ENCODE measurements at regions of chr10 and their contacts with region 1.

Region 1: GRCh38 chr10:3239066-3239919 is 66.7 kb upstream of the PITRM1 start:
- DNase-seq: peak; percentile 92
- H3K4me3 ChIP-seq: peak overlapping the region in 3 of 8 donors; percentile 12 to 46 (median 19)
- H3K27ac ChIP-seq: peak overlapping the region in 7 of 8 donors; percentile 66 to 78 (median 73)
- H3K4me1 ChIP-seq: peaks cover 0 to 16% (median 10%) of the 10 kb centered on the region in 6 donors
- H3K27me3 ChIP-seq: peaks cover 0 to 13% (median 0%) of the 10 kb centered on the region in 7 donors
- CTCF ChIP-seq: peak; percentile 82 to 95 (median 90)
- POLR2A ChIP-seq: no peak

Region 2: DNA sequence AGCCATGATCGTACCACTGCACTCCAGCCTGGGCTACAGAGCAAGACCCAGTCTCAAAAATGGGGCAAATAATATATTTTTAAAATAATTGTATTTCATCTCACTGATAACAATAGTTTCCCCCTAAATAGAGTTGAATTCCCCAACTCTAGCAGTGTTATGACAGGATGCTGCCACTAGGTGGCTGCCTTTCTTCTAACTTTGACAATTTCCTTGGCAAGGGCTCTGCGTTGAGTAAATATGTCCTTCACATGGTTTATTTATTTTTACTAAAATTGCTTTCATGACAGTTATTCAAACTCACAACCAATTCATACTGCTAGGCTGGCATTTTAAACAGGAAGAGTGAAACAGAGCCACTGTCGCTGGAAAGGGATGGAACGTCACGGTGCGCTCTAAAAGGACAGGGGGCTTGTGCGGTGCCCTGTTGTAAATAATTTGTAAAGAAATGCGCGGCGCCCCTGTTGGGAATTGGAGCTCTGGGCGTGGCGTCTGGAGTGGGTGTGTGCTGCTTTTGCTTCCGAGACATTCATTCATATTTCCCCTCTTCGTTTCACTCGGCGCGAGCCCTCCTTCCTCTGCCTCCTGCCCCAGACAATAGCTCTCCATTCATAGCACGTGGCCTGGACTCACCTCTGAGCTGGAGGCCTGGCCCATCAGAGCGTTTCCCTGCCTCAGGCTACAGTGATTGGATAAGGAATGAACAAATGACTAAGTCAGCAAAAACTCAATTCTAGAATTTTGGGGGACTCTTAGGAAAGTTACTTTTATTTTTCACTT is 46.2 kb before region 1 on chr10:
- intact Hi-C with region 1: no loop called
- DNase-seq: no peak
- H3K4me3 ChIP-seq: peak overlapping the region in 2 of 8 donors; percentile 16 to 36
- H3K27ac ChIP-seq: peak overlapping the region in 5 of 8 donors; percentile 35 to 65 (median 52)
- H3K4me1 ChIP-seq: peaks cover 7 to 29% (median 15%) of the 10 kb centered on the region in 6 donors
- H3K27me3 ChIP-seq: peaks cover 0 to 19% (median 3%) of the 10 kb centered on the region in 7 donors
- CTCF ChIP-seq: peak; percentile 41 to 90 (median 83)
- POLR2A ChIP-seq: no peak

Region 3: GRCh38 chr10:3419502-3420495 is 180.5 kb after region 1 on chr10:
- intact Hi-C with region 1: no loop called
- DNase-seq: no peak
- H3K4me3 ChIP-seq: no peak overlapping the region
- H3K27ac ChIP-seq: no peak overlapping the region
- H3K4me1 ChIP-seq: peaks cover 3 to 20% (median 5%) of the 10 kb centered on the region in 6 donors
- H3K27me3 ChIP-seq: peaks cover 0 to 10% (median 0%) of the 10 kb centered on the region in 7 donors
- CTCF ChIP-seq: no peak
- POLR2A ChIP-seq: no peak

Region 4: GRCh38 chr10:3538658-3539531 is 299.6 kb after region 1 on chr10:
- intact Hi-C with region 1: no loop called
- DNase-seq: no peak
- H3K4me3 ChIP-seq: no peak overlapping the region
- H3K27ac ChIP-seq: peak overlapping the region in 1 of 8 donors; percentile 56
- H3K4me1 ChIP-seq: no peaks in the 10 kb centered on the region
- H3K27me3 ChIP-seq: no peaks in the 10 kb centered on the region
- CTCF ChIP-seq: no peak
- POLR2A ChIP-seq: no peak

Region 5: GRCh38 chr10:3776796-3777571 is 537.7 kb after region 1 on chr10:
- intact Hi-C with region 1: loop called (anchors 10 kb)
- DNase-seq: no peak
- H3K4me3 ChIP-seq: peak overlapping the region in 1 of 8 donors; percentile 23
- H3K27ac ChIP-seq: peak overlapping the region; percentile 10 to 100 (median 100)
- H3K4me1 ChIP-seq: peaks cover 50 to 87% (median 69%) of the 10 kb centered on the region in 6 donors
- H3K27me3 ChIP-seq: no peaks in the 10 kb centered on the region
- CTCF ChIP-seq: no peak
- POLR2A ChIP-seq: no peak

Region 6: GRCh38 chr10:4656576-4657182 is 1417.4 kb after region 1 on chr10:
- intact Hi-C with region 1: loop called (anchors 5 kb)
- DNase-seq: peak; percentile 76
- H3K4me3 ChIP-seq: no peak overlapping the region
- H3K27ac ChIP-seq: no peak overlapping the region
- H3K4me1 ChIP-seq: peaks cover 0 to 7% (median 3%) of the 10 kb centered on the region in 6 donors
- H3K27me3 ChIP-seq: no peaks in the 10 kb centered on the region
- CTCF ChIP-seq: peak; percentile 49 to 88 (median 84)
- POLR2A ChIP-seq: no peak

Region 7: DNA sequence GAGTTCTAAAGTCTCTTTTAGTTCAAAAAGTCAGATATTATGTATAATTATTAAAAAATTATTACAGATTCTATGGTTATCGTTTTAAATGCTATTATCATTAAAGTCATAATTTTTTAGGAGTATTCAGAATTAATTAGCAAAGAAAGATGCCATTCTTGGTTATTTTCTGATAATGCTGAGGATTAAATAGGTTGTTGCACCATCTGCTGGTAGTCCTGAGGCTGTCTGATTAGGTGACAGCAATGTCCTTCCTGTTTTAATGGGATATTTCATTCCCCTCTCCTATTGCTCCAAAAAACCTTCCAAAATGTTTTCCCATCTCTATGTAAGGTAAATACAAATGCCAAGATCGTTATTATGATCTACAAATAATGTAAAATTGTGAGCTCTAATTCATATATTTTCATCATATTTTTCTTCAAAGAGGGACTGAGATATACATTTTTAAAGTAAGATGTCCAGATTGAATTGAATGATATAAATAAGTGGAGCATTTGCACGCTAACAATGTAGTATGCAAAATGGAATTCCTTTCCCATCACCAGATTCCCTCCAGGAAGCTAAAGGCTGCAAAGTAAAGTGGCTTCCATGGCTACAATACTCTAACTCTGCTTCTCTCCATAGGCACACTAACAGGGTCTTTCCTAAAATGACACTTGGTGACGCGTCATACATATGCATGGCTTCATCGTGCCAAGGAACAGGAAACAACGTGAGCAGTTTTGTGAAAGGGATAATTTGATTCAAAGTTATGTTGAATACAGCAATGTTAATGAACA is 1527.9 kb after region 1 on chr10:
- intact Hi-C with region 1: loop called (anchors 5 kb)
- DNase-seq: no peak
- H3K4me3 ChIP-seq: no peak overlapping the region
- H3K27ac ChIP-seq: no peak overlapping the region
- H3K4me1 ChIP-seq: peaks cover 0 to 12% (median 4%) of the 10 kb centered on the region in 6 donors
- H3K27me3 ChIP-seq: no peaks in the 10 kb centered on the region
- CTCF ChIP-seq: peak; percentile 19 to 69 (median 59)
- POLR2A ChIP-seq: no peak